ENCODE measurements at regions of chr3 and their contacts with region 1.

Region 1: GRCh38 chr3:48556793-48557626 is at the start of gene PFKFB4:
- DNase-seq: peak; percentile 97
- H3K4me3 ChIP-seq: peak within 1 kb of the TSS; percentile 89
- H3K27me3 ChIP-seq: no peaks in the 10 kb centered on the region
- CTCF ChIP-seq: peak; percentile 10; the same call in 1 of the 2 replicates
- polyA plus RNA-seq, gene PFKFB4: 9.8 and 12.8 TPM in 2 replicates

Region 2: GRCh38 chr3:48372377-48372770 is 184.6 kb before region 1 on chr3:
- CTCF ChIA-PET with region 1: no interaction called
- POLR2A ChIA-PET with region 1: no interaction called
- DNase-seq: no peak
- H3K4me3 ChIP-seq: no peak overlapping the region
- H3K27me3 ChIP-seq: peaks cover 12% of the 10 kb centered on the region
- CTCF ChIP-seq: no peak

Region 3: DNA sequence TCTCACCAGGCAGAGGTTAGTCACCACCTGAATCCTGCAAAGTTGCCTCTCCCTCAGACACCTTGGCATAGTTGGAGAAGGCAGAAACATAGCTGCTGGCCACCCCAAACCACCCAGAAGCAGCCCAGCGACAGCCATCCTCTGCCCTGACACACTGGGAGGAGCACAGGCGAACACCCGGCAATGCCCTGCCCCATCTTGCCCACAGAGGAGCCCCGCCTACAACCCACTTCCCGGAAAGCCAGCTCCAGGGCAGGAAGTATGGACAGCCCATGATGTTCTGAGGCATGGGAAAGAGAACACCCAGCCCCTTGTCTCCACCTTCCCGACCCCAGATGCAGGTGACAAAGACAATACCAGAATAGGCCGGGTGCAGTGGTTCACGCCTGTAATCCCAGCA is 40.4 kb before region 1 on chr3:
- CTCF ChIA-PET with region 1: no interaction called
- POLR2A ChIA-PET with region 1: no interaction called
- DNase-seq: no peak
- H3K4me3 ChIP-seq: no peak overlapping the region
- H3K27me3 ChIP-seq: no peaks in the 10 kb centered on the region
- CTCF ChIP-seq: no peak

Region 4: GRCh38 chr3:48595526-48596121 is 38.6 kb after region 1 on chr3:
- CTCF ChIA-PET with region 1: interaction called, 43 read pairs
- POLR2A ChIA-PET with region 1: no interaction called
- DNase-seq: peak; percentile 80
- H3K4me3 ChIP-seq: peak overlapping the region; percentile 61; the same call in 1 of the 2 replicates
- H3K27me3 ChIP-seq: no peaks in the 10 kb centered on the region
- CTCF ChIP-seq: no peak

Region 5: DNA sequence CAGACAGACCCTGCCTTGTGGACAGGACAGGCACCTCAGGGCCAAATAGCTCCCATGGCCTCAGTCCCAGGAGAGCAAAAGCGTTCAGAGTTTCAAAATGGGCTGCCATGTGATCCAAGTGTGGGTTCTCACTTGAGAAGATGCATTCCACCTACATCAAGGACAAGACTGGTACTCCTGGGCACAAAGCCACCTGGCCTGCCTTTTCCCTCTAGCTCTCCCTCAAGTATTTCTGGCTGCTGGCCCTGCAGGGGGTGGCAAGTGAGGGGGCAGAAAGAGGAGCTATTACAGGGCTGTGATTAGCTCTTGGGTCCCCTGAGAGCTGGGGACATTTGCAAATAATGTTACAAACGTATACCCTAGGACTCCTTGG is 44.6 kb after region 1 on chr3:
- CTCF ChIA-PET with region 1: interaction called, 43 read pairs
- POLR2A ChIA-PET with region 1: no interaction called
- DNase-seq: no peak
- H3K4me3 ChIP-seq: no peak overlapping the region
- H3K27me3 ChIP-seq: no peaks in the 10 kb centered on the region
- CTCF ChIP-seq: no peak

Region 6: GRCh38 chr3:49081429-49081828 is 524.4 kb after region 1 on chr3:
- CTCF ChIA-PET with region 1: no interaction called
- POLR2A ChIA-PET with region 1: no interaction called
- DNase-seq: no peak
- H3K4me3 ChIP-seq: no peak overlapping the region
- H3K27me3 ChIP-seq: no peaks in the 10 kb centered on the region
- CTCF ChIP-seq: no peak

Measured in BJ (cell line).